Dorsolateral prefrontal cortex (tissue), 120 donors: ENCODE measurements at regions of chr3 and their contacts with region 1.

Region 1: DNA sequence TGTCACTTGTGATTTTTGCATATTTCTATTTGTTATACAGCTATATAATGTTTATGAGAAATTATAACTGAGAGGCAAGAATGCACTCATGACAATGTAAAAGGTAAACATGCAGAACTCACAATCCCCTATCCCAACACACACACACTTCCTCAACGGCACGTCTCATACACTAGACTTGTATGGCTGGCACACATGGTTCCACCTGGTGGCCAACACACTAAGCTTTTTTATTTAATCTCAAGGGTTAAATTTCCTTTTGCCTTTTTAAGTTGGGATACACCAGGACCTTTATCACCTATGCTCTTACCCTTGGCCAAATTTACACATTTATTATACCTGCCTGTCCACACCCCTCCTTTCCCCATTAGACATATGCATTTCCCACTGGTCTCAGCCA is 88.6 kb upstream of the PSMD6 start:
- DNase-seq: no peak
- H3K4me3 ChIP-seq: no peak overlapping the region
- H3K27ac ChIP-seq: no peak overlapping the region
- H3K27me3 ChIP-seq: peaks cover 0 to 4% (median 0%) of the 10 kb centered on the region in 45 donors
- CTCF ChIP-seq: no peak

Region 2: GRCh38 chr3:64143409-64144130 is 31.7 kb after region 1 on chr3:
- intact Hi-C with region 1: no loop called
- DNase-seq: peak in 1 of 10 donors; percentile 43
- H3K4me3 ChIP-seq: no peak overlapping the region
- H3K27ac ChIP-seq: peak overlapping the region in 52 of 59 donors; percentile 3 to 83 (median 54)
- H3K27me3 ChIP-seq: no peaks in the 10 kb centered on the region
- CTCF ChIP-seq: no peak

Region 3: DNA sequence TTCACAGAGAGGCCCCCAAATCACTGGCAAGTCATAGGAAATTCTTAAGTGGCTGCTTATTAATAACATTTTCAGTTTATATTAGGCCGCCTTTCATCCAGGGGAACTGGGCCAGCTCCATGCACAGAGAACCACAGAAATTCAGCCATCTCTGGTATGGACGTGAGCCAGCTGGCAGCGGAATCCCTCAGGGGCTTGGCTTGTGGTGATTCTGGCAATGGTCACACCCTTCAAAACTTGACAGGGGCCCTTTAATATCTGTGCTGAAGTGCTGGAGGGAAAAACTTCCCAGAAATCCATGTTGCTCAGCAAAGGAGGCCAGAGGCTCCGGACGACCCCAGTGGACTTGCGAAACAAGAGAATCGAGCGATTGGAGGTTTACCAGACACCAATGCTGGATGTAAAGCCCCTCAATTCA is 102.1 kb after region 1 on chr3:
- intact Hi-C with region 1: loop called in 1 of 2 experiments (anchors 5 kb)
- DNase-seq: no peak
- H3K4me3 ChIP-seq: peak overlapping the region in 30 of 59 donors; percentile 0 to 36 (median 16)
- H3K27ac ChIP-seq: peak overlapping the region in 14 of 59 donors; percentile 0 to 52 (median 22)
- H3K27me3 ChIP-seq: no peaks in the 10 kb centered on the region
- CTCF ChIP-seq: no peak